Naive thymus-derived CD4-positive, alpha-beta T cell (primary cell): ENCODE measurements at regions of chr19 and their contacts with region 1.

Region 1: GRCh38 chr19:55632463-55632834 is 8.1 kb upstream of the ZNF784 start:
- DNase-seq: peak in 8 of 9 donors; percentile 81 to 93 (median 88)
- ATAC-seq: peak; percentile 76
- H3K4me3 ChIP-seq: no peak overlapping the region
- H3K4me3 Mint-ChIP-seq: peak overlapping the region; percentile 2 to 82 (median 34)
- H3K27ac ChIP-seq: peak overlapping the region; percentile 16
- H3K27ac Mint-ChIP-seq: peak overlapping the region; percentile 17 to 95 (median 71)
- H3K4me1 ChIP-seq: peaks cover 23 to 28% of the 10 kb centered on the region in 2 donors
- H3K4me1 Mint-ChIP-seq: peaks cover 39 to 54% (median 46%) of the 10 kb centered on the region in 7 donors
- H3K27me3 ChIP-seq: no peaks in the 10 kb centered on the region
- H3K27me3 Mint-ChIP-seq: peaks cover 0 to 12% (median 0%) of the 10 kb centered on the region in 5 donors

Region 2: GRCh38 chr19:55407800-55408532 is 224.5 kb before region 1 on chr19:
- CTCF ChIA-PET with region 1: no interaction called
- POLR2A ChIA-PET with region 1: no interaction called
- intact Hi-C with region 1: loop called in 1 of 2 experiments (anchors 5 kb)
- DNase-seq: peak; percentile 94 to 99 (median 97)
- ATAC-seq: peak; percentile 93
- H3K4me3 ChIP-seq: peak overlapping the region; percentile 89
- H3K4me3 Mint-ChIP-seq: peak overlapping the region; percentile 86 to 97 (median 92)
- H3K27ac ChIP-seq: peak overlapping the region; percentile 96
- H3K27ac Mint-ChIP-seq: peak overlapping the region; percentile 93 to 100 (median 99)
- H3K4me1 ChIP-seq: peaks cover 17 to 24% of the 10 kb centered on the region in 2 donors
- H3K4me1 Mint-ChIP-seq: peaks cover 21 to 36% (median 26%) of the 10 kb centered on the region in 7 donors
- H3K27me3 ChIP-seq: no peaks in the 10 kb centered on the region
- H3K27me3 Mint-ChIP-seq: peaks cover 0 to 12% (median 0%) of the 10 kb centered on the region in 5 donors

Region 3: GRCh38 chr19:55503502-55504251 is 128.8 kb before region 1 on chr19:
- CTCF ChIA-PET with region 1: interaction called, 11 read pairs
- POLR2A ChIA-PET with region 1: no interaction called
- intact Hi-C with region 1: no loop called
- DNase-seq: peak; percentile 81 to 98 (median 92)
- ATAC-seq: peak; percentile 98
- H3K4me3 ChIP-seq: peak overlapping the region; percentile 79
- H3K4me3 Mint-ChIP-seq: peak overlapping the region; percentile 78 to 89 (median 84)
- H3K27ac ChIP-seq: peak overlapping the region; percentile 46
- H3K27ac Mint-ChIP-seq: peak overlapping the region; percentile 59 to 96 (median 82)
- H3K4me1 ChIP-seq: peaks cover 4% of the 10 kb centered on the region in 2 donors
- H3K4me1 Mint-ChIP-seq: peaks cover 0 to 22% (median 10%) of the 10 kb centered on the region in 7 donors
- H3K27me3 ChIP-seq: no peaks in the 10 kb centered on the region
- H3K27me3 Mint-ChIP-seq: peaks cover 0 to 8% (median 6%) of the 10 kb centered on the region in 5 donors

Region 4: DNA sequence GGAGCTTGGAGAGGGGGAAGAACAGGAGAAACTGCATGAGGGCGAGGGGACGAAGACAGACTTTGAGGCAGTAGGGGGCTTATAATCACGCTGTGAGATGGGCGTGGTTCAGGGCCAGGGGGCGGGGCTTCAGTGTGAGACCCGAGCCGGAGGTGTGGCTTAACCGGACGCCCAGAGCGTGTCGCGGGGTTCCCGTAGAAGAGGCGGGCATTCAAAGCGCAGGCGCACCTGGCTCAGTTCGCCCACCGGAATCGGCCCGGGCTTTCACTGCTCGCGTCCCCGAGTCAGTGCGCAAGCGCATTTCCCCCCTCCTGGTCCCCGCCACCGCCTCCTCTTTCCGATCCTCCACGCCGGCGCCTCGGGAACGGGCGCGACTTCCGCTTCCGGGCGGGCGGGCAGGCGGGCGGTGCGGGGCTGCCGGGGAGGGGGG is 27.2 kb before region 1 on chr19:
- CTCF ChIA-PET with region 1: interaction called, 42 read pairs
- POLR2A ChIA-PET with region 1: interaction called, 76 read pairs
- intact Hi-C with region 1: loop called in 1 of 2 experiments (anchors 1 kb)
- DNase-seq: peak; percentile 90 to 99 (median 97)
- ATAC-seq: peak; percentile 87
- H3K4me3 ChIP-seq: peak overlapping the region; percentile 51
- H3K4me3 Mint-ChIP-seq: peak overlapping the region; percentile 78 to 98 (median 90)
- H3K27ac ChIP-seq: peak overlapping the region; percentile 90
- H3K27ac Mint-ChIP-seq: peak overlapping the region; percentile 77 to 96 (median 91)
- H3K4me1 ChIP-seq: peaks cover 7 to 18% of the 10 kb centered on the region in 2 donors
- H3K4me1 Mint-ChIP-seq: peaks cover 37 to 70% (median 64%) of the 10 kb centered on the region in 7 donors
- H3K27me3 ChIP-seq: no peaks in the 10 kb centered on the region
- H3K27me3 Mint-ChIP-seq: peaks cover 0 to 3% (median 0%) of the 10 kb centered on the region in 5 donors

Region 5: DNA sequence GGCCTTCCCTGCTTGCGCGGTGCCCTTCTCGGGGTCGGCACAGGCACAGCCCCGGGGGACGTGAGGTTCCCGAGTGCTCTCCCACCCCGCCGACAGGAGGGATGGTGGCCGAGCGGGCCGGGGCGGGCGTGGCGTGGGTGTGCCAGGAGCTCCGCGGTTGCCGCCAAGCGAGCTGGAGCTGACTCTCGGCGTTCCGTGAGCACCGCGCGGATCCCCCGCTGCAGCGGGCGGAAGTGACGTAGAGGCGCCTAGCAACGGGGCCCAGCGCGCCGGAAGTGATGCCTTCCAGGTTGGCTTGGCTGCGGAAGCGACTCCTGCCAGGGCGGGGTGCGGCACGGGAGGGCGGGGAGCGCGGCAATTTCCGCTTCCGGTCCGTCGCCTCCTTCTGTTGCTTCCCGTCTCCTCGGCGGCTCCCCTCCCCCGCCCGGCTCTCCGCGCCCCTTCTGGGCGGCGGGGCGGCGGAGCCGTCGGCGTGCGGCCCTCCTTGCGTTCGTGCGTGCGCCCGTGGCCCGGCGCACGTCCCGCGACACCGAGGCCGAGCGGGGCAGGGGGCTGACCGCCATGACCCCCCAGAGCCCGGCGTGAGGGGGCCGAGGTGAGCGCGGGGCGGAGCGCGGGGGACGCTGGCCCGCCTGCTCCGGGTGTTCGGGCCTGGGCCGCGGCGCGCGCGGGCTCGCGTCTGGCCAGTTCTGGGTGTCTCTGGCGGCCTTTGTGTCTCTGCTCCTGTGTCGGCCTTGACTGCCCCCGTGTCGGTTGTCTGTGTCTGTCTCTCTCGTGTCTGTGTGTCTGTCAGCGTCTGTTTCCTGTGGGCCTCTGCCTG is 42.6 kb after region 1 on chr19 and contains the start of gene EPN1:
- CTCF ChIA-PET with region 1: interaction called, 5 read pairs
- POLR2A ChIA-PET with region 1: no interaction called
- intact Hi-C with region 1: loop called in 1 of 2 experiments (anchors 1 kb)
- DNase-seq: peak; percentile 88 to 98 (median 96)
- ATAC-seq: peak; percentile 93
- H3K4me3 ChIP-seq: peak within 1 kb of the TSS; percentile 72
- H3K4me3 Mint-ChIP-seq: peak within 1 kb of the TSS; percentile 89 to 99 (median 97)
- H3K27ac ChIP-seq: peak within 1 kb of the TSS; percentile 84
- H3K27ac Mint-ChIP-seq: peak within 1 kb of the TSS; percentile 90 to 99 (median 96)
- H3K4me1 ChIP-seq: peaks cover 26 to 28% of the 10 kb centered on the region in 2 donors
- H3K4me1 Mint-ChIP-seq: peaks cover 49 to 72% (median 58%) of the 10 kb centered on the region in 7 donors
- H3K27me3 ChIP-seq: no peaks in the 10 kb centered on the region
- H3K27me3 Mint-ChIP-seq: no peaks in the 10 kb centered on the region
- total RNA-seq, gene EPN1: 45.2 to 67.1 (median 52.2) TPM